Transverse colon (tissue), 4 donors: ENCODE measurements at regions of chr18 and their contacts with region 1.

Region 1: GRCh38 chr18:68417826-68418225 is 297.1 kb downstream of the TMX3 start:
- DNase-seq: no peak
- H3K4me3 ChIP-seq: no peak overlapping the region
- H3K27ac ChIP-seq: no peak overlapping the region
- H3K4me1 ChIP-seq: no peaks in the 10 kb centered on the region
- H3K27me3 ChIP-seq: no peaks in the 10 kb centered on the region
- CTCF ChIP-seq: no peak
- EP300 ChIP-seq: no peak
- POLR2A ChIP-seq: no peak

Region 2: GRCh38 chr18:68152770-68153169 is 265.1 kb before region 1 on chr18:
- in situ Hi-C with region 1: no loop called
- intact Hi-C with region 1: no loop called
- DNase-seq: no peak
- H3K4me3 ChIP-seq: no peak overlapping the region
- H3K27ac ChIP-seq: no peak overlapping the region
- H3K4me1 ChIP-seq: no peaks in the 10 kb centered on the region
- H3K27me3 ChIP-seq: no peaks in the 10 kb centered on the region
- CTCF ChIP-seq: no peak
- EP300 ChIP-seq: no peak
- POLR2A ChIP-seq: no peak

Region 3: GRCh38 chr18:68362907-68363306 is 54.9 kb before region 1 on chr18:
- in situ Hi-C with region 1: no loop called
- intact Hi-C with region 1: no loop called
- DNase-seq: no peak
- H3K4me3 ChIP-seq: no peak overlapping the region
- H3K27ac ChIP-seq: no peak overlapping the region
- H3K4me1 ChIP-seq: no peaks in the 10 kb centered on the region
- H3K27me3 ChIP-seq: no peaks in the 10 kb centered on the region
- CTCF ChIP-seq: no peak
- EP300 ChIP-seq: no peak
- POLR2A ChIP-seq: no peak

Region 4: DNA sequence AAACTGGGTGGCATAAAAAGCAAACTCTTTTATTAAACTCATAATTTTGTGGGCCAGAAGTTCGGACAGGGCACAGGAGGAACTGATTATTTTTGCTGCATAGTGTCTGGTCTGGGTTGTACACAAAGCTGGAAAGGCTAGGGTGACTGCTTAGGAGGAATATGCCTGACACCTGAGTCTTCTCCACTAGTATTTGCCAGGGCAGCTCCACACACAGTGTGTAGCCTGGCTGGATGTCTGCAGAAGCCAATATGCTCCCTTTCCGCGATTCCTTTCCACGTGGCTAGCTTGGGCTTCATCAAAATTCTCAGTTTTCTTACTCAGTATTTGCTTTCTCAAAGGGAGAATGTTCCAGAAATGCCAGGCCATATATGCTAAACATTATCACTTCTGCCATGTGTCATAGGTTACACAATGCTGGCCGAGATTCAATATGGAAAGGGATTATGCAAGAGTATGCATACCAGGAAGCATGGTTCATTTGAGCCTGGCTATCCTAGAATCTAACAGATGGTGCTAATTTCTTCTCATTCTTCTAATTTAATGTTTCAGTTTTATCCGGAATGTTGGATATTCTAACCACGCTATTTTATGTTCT is 840.1 kb after region 1 on chr18:
- in situ Hi-C with region 1: no loop called
- intact Hi-C with region 1: loop called (anchors 10 kb)
- DNase-seq: no peak
- H3K4me3 ChIP-seq: no peak overlapping the region
- H3K27ac ChIP-seq: no peak overlapping the region
- H3K4me1 ChIP-seq: no peaks in the 10 kb centered on the region
- H3K27me3 ChIP-seq: no peaks in the 10 kb centered on the region
- CTCF ChIP-seq: no peak
- EP300 ChIP-seq: no peak
- POLR2A ChIP-seq: no peak